Stomach (tissue), 19 donors: ENCODE measurements at regions of chr2 and their contacts with region 1.

Region 1: GRCh38 chr2:3403587-3404334 is 24.3 kb downstream of the TRAPPC12 start:
- DNase-seq: no peak
- H3K4me3 ChIP-seq: no peak overlapping the region
- H3K27ac ChIP-seq: no peak overlapping the region
- H3K4me1 ChIP-seq: peaks cover 0 to 25% (median 9%) of the 10 kb centered on the region in 4 donors
- H3K27me3 ChIP-seq: no peaks in the 10 kb centered on the region
- CTCF ChIP-seq: no peak
- EP300 ChIP-seq: no peak
- POLR2A ChIP-seq: no peak

Region 2: GRCh38 chr2:3126911-3127621 is 276.7 kb before region 1 on chr2:
- intact Hi-C with region 1: no loop called
- DNase-seq: peak in 1 of 2 donors; percentile 40
- H3K4me3 ChIP-seq: no peak overlapping the region
- H3K27ac ChIP-seq: no peak overlapping the region
- H3K4me1 ChIP-seq: no peaks in the 10 kb centered on the region
- H3K27me3 ChIP-seq: peaks cover 0 to 15% (median 0%) of the 10 kb centered on the region in 3 donors
- CTCF ChIP-seq: no peak
- EP300 ChIP-seq: no peak
- POLR2A ChIP-seq: no peak

Region 3: DNA sequence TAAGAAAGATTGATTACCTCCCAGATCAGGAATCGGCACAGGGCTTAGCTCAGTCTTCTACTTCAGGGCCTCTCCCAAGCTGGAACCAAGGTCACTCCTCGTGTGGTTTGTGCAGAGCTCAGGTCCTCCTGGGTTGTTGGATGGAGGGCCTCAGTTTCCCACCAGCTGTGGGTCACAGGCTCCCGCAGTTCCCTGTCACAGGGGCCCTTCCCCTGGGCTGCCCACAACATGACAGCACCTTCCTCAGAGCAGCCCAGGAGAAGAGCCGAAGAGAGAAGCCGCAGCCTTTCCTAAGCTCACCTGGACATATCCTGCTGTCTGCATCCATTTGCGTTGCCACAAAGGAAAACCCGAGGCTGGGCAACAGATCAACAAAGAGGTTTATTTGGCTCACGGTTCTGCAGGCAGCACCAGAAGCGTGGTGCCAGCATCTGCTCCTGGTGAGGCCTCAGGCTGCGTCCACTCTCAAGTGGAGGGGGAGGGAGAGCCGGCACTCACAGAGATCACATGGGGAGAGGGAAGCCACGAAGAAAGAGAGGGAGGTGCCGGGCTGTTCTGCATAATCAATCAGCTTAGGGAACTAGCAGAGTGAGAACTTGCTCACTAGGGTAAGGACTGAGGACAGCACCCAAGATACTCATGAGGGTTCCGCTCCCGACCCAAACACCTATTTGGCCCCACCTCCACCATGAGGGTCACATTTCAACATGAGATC is 241.3 kb after region 1 on chr2:
- intact Hi-C with region 1: loop called (anchors 5 kb)
- DNase-seq: no peak
- H3K4me3 ChIP-seq: no peak overlapping the region
- H3K27ac ChIP-seq: no peak overlapping the region
- H3K4me1 ChIP-seq: no peaks in the 10 kb centered on the region
- H3K27me3 ChIP-seq: peaks cover 0 to 4% (median 0%) of the 10 kb centered on the region in 3 donors
- CTCF ChIP-seq: no peak
- EP300 ChIP-seq: no peak
- POLR2A ChIP-seq: no peak